ENCODE measurements at regions of chr1 and their contacts with region 1.

Region 1: DNA sequence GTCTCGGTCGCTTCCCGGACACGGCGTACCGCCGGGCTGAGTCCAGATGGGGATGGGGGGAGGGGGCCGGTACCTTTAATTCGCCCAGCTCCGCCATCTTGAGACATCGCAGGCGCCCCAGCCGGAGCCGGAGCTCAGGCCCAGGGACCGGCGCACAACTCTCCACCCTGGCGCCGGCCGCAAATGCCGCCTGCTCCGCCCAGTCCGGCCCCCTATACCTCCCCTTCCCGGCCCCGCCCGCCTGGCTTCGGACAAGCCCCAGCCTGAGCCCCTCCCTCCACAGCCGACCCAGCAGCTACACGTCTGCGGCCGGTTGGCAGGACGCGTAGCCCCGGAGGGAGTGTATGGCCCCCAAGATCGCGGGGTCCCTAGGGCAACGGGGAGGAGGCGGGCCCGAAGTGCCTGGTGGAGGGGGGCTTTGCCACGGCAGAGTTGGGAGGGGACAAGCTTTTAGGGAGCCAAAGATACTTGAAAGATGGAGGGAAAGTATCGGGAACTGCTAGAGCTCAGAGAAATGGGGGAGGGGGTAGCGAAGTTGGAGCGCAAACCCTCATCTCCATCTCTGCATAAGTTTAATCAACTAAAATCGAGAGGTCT is at the start of gene PIAS3:
- DNase-seq: peak; percentile 91 to 97 (median 94)
- H3K4me3 ChIP-seq: peak within 1 kb of the TSS; percentile 88 to 97 (median 92)
- H3K27ac ChIP-seq: peak within 1 kb of the TSS; percentile 17 to 82
- H3K4me1 ChIP-seq: peaks cover 0 to 17% (median 15%) of the 10 kb centered on the region in 4 experiments
- H3K27me3 ChIP-seq: no peaks in the 10 kb centered on the region

Region 2: GRCh38 chr1:145720877-145721671 is 137.9 kb before region 1 on chr1:
- CTCF ChIA-PET with region 1: no interaction called
- POLR2A ChIA-PET with region 1: no interaction called
- DNase-seq: peak; percentile 39 to 65 (median 63)
- H3K4me3 ChIP-seq: peak overlapping the region; percentile 5 to 75 (median 53)
- H3K27ac ChIP-seq: no peak overlapping the region
- H3K4me1 ChIP-seq: peaks cover 0 to 9% (median 9%) of the 10 kb centered on the region in 4 experiments
- H3K27me3 ChIP-seq: peaks cover 0 to 24% (median 7%) of the 10 kb centered on the region in 5 experiments

Region 3: GRCh38 chr1:145871994-145872924 is 13.3 kb after region 1 on chr1:
- CTCF ChIA-PET with region 1: interaction called, 14 read pairs
- POLR2A ChIA-PET with region 1: interaction called, 11 read pairs
- DNase-seq: peak; percentile 31 to 70 (median 62)
- H3K4me3 ChIP-seq: peak overlapping the region; percentile 19 to 74 (median 58)
- H3K27ac ChIP-seq: peak overlapping the region in 1 of 2 experiments; percentile 33
- H3K4me1 ChIP-seq: peaks cover 0 to 25% (median 17%) of the 10 kb centered on the region in 4 experiments
- H3K27me3 ChIP-seq: peaks cover 0 to 2% (median 0%) of the 10 kb centered on the region in 5 experiments

Region 4: DNA sequence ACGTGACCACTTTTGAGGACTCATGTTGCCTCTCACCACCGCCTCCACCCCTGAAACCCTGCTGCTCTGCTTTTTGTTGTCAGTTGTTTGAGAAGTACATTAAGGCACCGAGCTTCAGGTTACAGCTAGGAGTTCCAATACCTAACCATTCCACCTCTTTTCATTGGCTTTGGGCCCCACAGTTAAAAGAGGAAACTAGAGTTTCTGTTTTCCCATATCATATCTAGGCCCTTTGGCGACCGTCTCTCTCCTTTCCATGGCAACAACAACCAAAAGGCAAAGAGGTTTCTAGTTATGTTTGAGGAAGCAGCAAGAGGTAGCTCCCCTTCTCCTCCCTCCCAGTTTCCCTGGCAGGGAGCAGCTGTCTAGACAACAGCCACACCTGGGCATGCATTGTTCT is 20.8 kb after region 1 on chr1:
- CTCF ChIA-PET with region 1: interaction called, 33 read pairs
- POLR2A ChIA-PET with region 1: interaction called, 3 read pairs
- DNase-seq: peak; percentile 25 to 63 (median 61)
- H3K4me3 ChIP-seq: peak overlapping the region in 1 of 7 experiments; percentile 6
- H3K27ac ChIP-seq: no peak overlapping the region
- H3K4me1 ChIP-seq: peaks cover 4 to 14% (median 7%) of the 10 kb centered on the region in 4 experiments
- H3K27me3 ChIP-seq: peaks cover 0 to 5% (median 0%) of the 10 kb centered on the region in 5 experiments

Region 5: DNA sequence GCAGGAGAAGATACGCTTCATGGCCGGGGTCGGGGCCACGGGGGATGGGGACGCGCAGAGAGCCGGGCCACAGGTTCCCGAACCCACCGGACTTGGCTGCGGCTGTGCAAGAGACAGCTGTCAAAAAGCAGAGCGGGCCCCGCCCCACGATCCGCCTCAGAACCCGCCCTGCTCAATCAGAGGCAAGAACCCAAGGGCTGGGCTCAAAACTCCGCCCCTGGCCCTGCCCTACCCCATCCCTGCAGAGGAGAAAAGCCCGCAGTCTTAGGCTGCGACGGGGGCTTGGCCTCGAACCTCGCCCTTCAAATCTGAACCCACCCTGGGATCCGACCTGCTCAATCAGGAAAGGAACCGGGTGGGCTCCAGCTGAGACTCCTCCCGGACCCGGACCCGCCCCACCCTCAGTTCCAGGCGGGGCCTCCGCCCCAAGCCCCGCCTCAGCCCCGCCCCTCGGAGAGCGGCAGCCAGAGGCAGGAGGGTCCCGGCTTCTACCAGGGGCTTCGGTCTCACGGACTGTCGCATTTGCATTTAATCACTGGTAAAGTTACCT is 26.8 kb after region 1 on chr1 and contains the start of gene ANKRD35:
- CTCF ChIA-PET with region 1: interaction called, 33 read pairs
- POLR2A ChIA-PET with region 1: no interaction called
- DNase-seq: peak; percentile 69 to 85 (median 84)
- H3K4me3 ChIP-seq: peak within 1 kb of the TSS; percentile 46 to 90 (median 74)
- H3K27ac ChIP-seq: no peak within 1 kb of the TSS
- H3K4me1 ChIP-seq: peaks cover 0 to 11% (median 9%) of the 10 kb centered on the region in 4 experiments
- H3K27me3 ChIP-seq: peaks cover 0 to 12% (median 2%) of the 10 kb centered on the region in 5 experiments

Region 6: DNA sequence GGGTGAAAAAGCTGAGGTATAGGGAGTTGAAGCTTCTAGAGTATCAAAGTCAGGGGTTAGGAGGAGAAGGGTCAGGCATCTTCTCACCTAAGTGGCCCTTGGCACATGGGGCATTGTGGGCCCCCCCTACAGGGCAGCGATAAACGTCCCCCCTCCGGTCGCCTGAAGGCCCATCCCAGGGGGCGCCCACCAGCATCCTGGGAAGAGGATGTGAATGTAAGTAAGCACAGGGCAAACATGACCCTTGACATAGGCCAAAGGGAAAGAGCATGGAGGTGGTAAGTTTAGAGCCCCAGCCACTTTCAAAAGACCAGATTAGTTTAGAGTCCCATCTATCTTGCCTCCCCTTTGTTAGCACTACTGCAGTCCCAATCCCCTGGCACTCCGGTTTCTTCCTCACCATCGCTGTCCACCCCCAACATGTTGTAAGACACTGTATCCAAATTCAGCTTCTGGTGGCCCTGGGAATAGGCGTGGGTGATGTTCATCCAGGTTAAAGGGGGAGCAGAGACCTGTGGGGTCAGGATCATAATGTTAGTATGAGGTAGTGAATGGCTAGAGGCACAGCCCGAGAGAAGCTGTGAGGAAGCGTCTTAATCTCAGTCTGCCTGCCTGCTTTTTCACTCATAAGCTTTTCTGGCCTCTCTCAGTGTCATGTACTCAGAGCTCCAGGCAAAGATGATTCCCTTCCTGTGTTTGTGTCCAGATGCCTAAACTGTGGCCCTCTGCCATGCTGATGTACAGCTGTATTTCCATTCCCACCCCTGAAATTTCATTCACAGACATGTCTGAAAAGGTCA is 48.2 kb after region 1 on chr1:
- CTCF ChIA-PET with region 1: interaction called, 34 read pairs
- POLR2A ChIA-PET with region 1: no interaction called
- DNase-seq: no peak
- H3K4me3 ChIP-seq: no peak overlapping the region
- H3K27ac ChIP-seq: no peak overlapping the region
- H3K4me1 ChIP-seq: peaks cover 0 to 2% (median 0%) of the 10 kb centered on the region in 4 experiments
- H3K27me3 ChIP-seq: peaks cover 0 to 2% (median 0%) of the 10 kb centered on the region in 5 experiments

Measured in common myeloid progenitor, CD34-positive (primary cell).